GM12878 (cell line): ENCODE measurements at regions of chr5 and their contacts with region 1.

Region 1: DNA sequence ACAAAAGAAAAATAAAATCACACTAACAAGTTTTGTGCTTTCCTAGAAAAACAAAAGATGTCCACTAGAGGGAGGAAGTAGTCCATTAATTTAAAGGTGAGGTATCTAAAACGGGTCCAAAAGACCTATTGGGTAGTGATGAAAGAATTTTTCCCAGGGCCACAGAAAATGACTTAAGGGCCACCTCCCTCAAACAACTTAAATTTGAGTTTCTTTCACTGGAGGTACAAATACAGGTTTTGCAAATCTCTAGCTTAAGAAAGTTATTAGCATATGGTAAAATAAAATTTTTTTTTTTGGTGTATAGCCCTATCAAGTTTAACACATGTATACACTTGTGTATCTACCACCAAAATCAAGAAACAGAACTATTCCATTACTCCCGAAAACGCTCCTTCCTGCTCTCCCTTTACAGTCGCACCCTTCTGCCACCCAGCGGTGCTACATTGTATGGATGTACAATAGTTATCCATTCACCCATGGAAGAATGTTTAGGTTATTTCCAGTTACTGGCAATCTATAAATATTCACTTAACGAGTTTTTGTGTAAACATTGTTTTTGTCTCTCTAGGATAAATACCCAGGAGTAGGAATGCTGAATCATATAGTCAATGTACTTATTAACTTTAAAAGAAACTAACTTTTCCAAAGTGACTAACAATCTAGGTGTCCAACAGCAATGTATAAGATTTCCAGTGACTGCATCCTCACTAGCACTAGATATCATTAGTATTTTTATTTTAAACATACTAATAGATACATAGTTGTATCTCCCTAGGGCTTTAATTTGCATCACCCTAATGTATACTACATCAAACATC is 21.9 kb downstream of the DEPDC1B start:
- DNase-seq: peak; percentile 20
- ATAC-seq: peak; percentile 88
- H3K4me3 ChIP-seq: no peak overlapping the region
- H3K27ac ChIP-seq: no peak overlapping the region
- H3K4me1 ChIP-seq: no peaks in the 10 kb centered on the region
- H3K27me3 ChIP-seq: no peaks in the 10 kb centered on the region
- CTCF ChIP-seq: peak; percentile 35 to 61 (median 59); a peak in 5 of 6 replicates
- EP300 ChIP-seq: no peak
- POLR2A ChIP-seq: no peak
- RAD21 ChIP-seq: peak; percentile 72

Region 2: DNA sequence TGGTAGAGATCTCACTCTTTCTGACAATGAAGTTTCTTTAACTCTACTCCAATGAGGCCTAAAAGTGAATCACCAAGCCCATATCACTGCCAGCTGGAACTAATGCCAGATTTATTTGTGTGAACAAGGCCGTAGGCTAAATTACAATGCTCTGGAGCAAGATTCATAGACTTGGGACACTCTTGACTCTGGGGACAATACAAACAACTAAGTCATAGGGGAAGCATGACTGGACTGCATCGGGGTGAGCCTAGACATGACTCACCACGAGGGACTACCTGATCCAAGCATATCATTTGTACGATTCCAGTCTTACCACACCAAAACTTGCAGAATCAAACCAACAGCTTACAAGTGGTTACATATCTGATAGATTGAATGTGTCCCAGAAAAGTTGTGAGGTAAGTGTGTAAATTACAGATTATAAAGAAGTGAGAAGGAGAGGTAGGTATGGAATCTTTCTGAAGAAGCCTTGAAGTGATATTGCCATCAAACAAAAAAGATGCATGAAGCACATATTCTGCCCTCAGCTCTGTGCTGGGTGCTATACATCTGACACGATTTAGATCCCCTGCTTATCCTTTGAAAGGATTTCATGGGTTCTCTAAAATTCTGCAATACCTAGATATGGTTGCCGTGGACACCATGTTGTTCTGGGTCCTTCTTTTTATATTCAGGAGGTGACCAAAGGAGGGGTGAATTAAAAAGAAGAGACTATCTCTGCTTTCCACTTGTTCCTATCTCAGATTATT is 585.2 kb before region 1 on chr5:
- CTCF ChIA-PET with region 1: no interaction called
- POLR2A ChIA-PET with region 1: no interaction called
- RAD21 ChIA-PET with region 1: no interaction called
- SMC1A ChIA-PET with region 1: no interaction called
- in situ Hi-C with region 1: no loop called
- intact Hi-C with region 1: no loop called
- DNase-seq: no peak
- ATAC-seq: no peak
- H3K4me3 ChIP-seq: no peak overlapping the region
- H3K27ac ChIP-seq: no peak overlapping the region
- H3K4me1 ChIP-seq: no peaks in the 10 kb centered on the region
- H3K27me3 ChIP-seq: no peaks in the 10 kb centered on the region
- CTCF ChIP-seq: no peak
- EP300 ChIP-seq: no peak
- POLR2A ChIP-seq: no peak
- RAD21 ChIP-seq: no peak

Region 3: DNA sequence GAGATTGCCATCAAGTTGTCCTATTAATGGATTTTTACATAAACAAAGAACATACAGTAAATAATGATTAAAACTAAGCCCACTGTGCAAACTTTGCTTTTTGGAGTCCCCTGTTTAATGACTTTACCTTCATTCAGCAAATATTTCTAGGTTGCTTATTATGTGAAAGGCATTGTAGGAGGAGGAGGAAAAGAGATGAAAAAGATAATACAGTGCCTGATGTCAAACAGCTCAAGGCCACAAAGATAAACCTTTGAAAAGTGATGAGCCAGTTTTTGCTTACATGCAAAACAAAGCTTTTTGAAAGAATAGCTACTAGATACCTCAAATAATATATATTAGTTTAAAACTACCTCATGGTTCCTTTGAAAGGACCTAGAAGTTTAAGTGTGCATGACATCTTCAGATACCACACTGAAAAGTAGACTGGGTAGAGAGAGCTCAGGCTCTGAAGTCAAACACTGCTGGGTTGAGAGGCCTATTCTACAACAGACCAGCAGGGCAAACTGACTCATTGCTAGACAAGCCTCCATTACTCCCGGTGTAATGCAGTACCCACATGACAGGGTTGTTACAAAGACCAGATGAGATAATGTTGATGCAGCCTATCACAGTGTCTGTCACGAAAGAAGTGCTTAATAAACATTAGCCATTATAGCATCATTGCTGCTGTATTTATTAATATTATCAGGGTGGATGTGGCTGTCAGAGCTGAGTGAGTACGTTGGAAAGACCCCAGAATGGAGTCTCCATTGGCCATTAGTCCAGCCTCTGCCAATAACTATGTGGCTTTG is 10.1 kb after region 1 on chr5:
- CTCF ChIA-PET with region 1: interaction called, 22 read pairs
- POLR2A ChIA-PET with region 1: no interaction called
- RAD21 ChIA-PET with region 1: interaction called, 3 read pairs
- SMC1A ChIA-PET with region 1: interaction called, 5 read pairs
- in situ Hi-C with region 1: no loop called
- intact Hi-C with region 1: no loop called
- DNase-seq: no peak
- ATAC-seq: peak; percentile 98
- H3K4me3 ChIP-seq: no peak overlapping the region
- H3K27ac ChIP-seq: no peak overlapping the region
- H3K4me1 ChIP-seq: no peaks in the 10 kb centered on the region
- H3K27me3 ChIP-seq: no peaks in the 10 kb centered on the region
- CTCF ChIP-seq: peak; percentile 2 to 49 (median 45); a peak in 3 of 6 replicates
- EP300 ChIP-seq: no peak
- POLR2A ChIP-seq: no peak
- RAD21 ChIP-seq: no peak

Region 4: GRCh38 chr5:60779466-60779865 is 101.4 kb after region 1 on chr5:
- CTCF ChIA-PET with region 1: no interaction called
- POLR2A ChIA-PET with region 1: no interaction called
- RAD21 ChIA-PET with region 1: no interaction called
- SMC1A ChIA-PET with region 1: no interaction called
- in situ Hi-C with region 1: no loop called
- intact Hi-C with region 1: no loop called
- DNase-seq: no peak
- ATAC-seq: no peak
- H3K4me3 ChIP-seq: no peak overlapping the region
- H3K27ac ChIP-seq: no peak overlapping the region
- H3K4me1 ChIP-seq: no peaks in the 10 kb centered on the region
- H3K27me3 ChIP-seq: no peaks in the 10 kb centered on the region
- CTCF ChIP-seq: no peak
- EP300 ChIP-seq: no peak
- POLR2A ChIP-seq: no peak
- RAD21 ChIP-seq: no peak

Region 5: GRCh38 chr5:60843936-60844905 is 166.2 kb after region 1 on chr5 and contains the start of gene ELOVL7:
- CTCF ChIA-PET with region 1: interaction called, 4 read pairs
- POLR2A ChIA-PET with region 1: no interaction called
- RAD21 ChIA-PET with region 1: no interaction called
- SMC1A ChIA-PET with region 1: interaction called, 4 read pairs
- in situ Hi-C with region 1: no loop called
- intact Hi-C with region 1: loop called (anchors 5 kb)
- DNase-seq: no peak
- ATAC-seq: peak; percentile 97
- H3K4me3 ChIP-seq: peak within 1 kb of the TSS; percentile 94
- H3K27ac ChIP-seq: no peak within 1 kb of the TSS
- H3K4me1 ChIP-seq: no peaks in the 10 kb centered on the region
- H3K27me3 ChIP-seq: peaks cover 0 to 8% of the 10 kb centered on the region in 2 experiments; a peak in 3 of 4 replicates
- CTCF ChIP-seq: peak; percentile 28 to 56 (median 46); a peak in 5 of 6 replicates
- EP300 ChIP-seq: no peak
- POLR2A ChIP-seq: peak; percentile 66
- RAD21 ChIP-seq: peak; percentile 26; the same call in 1 of the 2 replicates
- polyA plus RNA-seq, gene ELOVL7: 0.26 to 0.27 TPM

Region 6: GRCh38 chr5:60929024-60929423 is 251.0 kb after region 1 on chr5:
- CTCF ChIA-PET with region 1: interaction called, 13 read pairs
- POLR2A ChIA-PET with region 1: no interaction called
- RAD21 ChIA-PET with region 1: interaction called, 4 read pairs
- SMC1A ChIA-PET with region 1: no interaction called
- in situ Hi-C with region 1: loop called (anchors 25 kb)
- intact Hi-C with region 1: no loop called
- DNase-seq: no peak
- ATAC-seq: no peak
- H3K4me3 ChIP-seq: no peak overlapping the region
- H3K27ac ChIP-seq: no peak overlapping the region
- H3K4me1 ChIP-seq: no peaks in the 10 kb centered on the region
- H3K27me3 ChIP-seq: no peaks in the 10 kb centered on the region
- CTCF ChIP-seq: peak in 1 of 3 experiments; percentile 29; a peak in 1 of 6 replicates
- EP300 ChIP-seq: no peak
- POLR2A ChIP-seq: no peak
- RAD21 ChIP-seq: no peak

Region 7: GRCh38 chr5:61496860-61497259 is 818.8 kb after region 1 on chr5:
- CTCF ChIA-PET with region 1: no interaction called
- POLR2A ChIA-PET with region 1: no interaction called
- RAD21 ChIA-PET with region 1: no interaction called
- SMC1A ChIA-PET with region 1: no interaction called
- in situ Hi-C with region 1: no loop called
- intact Hi-C with region 1: no loop called
- DNase-seq: no peak
- ATAC-seq: no peak
- H3K4me3 ChIP-seq: no peak overlapping the region
- H3K27ac ChIP-seq: no peak overlapping the region
- H3K4me1 ChIP-seq: no peaks in the 10 kb centered on the region
- H3K27me3 ChIP-seq: no peaks in the 10 kb centered on the region
- CTCF ChIP-seq: no peak
- EP300 ChIP-seq: no peak
- POLR2A ChIP-seq: no peak
- RAD21 ChIP-seq: no peak

Region 8: GRCh38 chr5:61933787-61934626 is 1256.0 kb after region 1 on chr5:
- CTCF ChIA-PET with region 1: no interaction called
- POLR2A ChIA-PET with region 1: no interaction called
- RAD21 ChIA-PET with region 1: no interaction called
- SMC1A ChIA-PET with region 1: no interaction called
- in situ Hi-C with region 1: no loop called
- intact Hi-C with region 1: loop called (anchors 5 kb)
- DNase-seq: peak; percentile 7
- ATAC-seq: peak; percentile 83
- H3K4me3 ChIP-seq: no peak overlapping the region
- H3K27ac ChIP-seq: no peak overlapping the region
- H3K4me1 ChIP-seq: no peaks in the 10 kb centered on the region
- H3K27me3 ChIP-seq: no peaks in the 10 kb centered on the region
- CTCF ChIP-seq: peak; percentile 43 to 54 (median 52); a peak in 4 of 6 replicates
- EP300 ChIP-seq: no peak
- POLR2A ChIP-seq: no peak
- RAD21 ChIP-seq: peak; percentile 70